ENCODE measurements at regions of chr9 and their contacts with region 1.

Region 1: DNA sequence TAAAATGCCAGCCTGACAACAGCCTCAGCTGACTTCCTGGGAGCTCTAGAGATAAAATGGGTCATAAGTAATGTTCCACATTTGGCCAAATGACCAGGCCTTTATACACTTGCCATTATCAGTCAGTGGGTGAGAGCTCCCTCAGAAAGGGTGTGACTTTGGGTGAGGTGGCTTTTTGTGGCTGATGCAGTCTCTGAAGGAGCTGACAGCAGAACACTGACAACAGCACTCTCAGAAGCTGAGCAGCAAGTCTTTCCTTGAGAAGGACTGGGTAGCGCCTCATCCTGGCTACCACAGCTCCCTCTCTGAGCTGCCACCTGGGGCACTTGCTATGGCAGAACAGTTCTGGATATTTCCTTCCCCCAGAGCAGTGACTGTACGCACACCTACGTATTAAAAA is 22.0 kb upstream of the GNAQ start:
- DNase-seq: no peak
- H3K4me3 ChIP-seq: no peak overlapping the region
- H3K27ac ChIP-seq: no peak overlapping the region
- H3K4me1 ChIP-seq: no peaks in the 10 kb centered on the region
- H3K27me3 ChIP-seq: peaks cover 2% of the 10 kb centered on the region
- CTCF ChIP-seq: no peak

Region 2: GRCh38 chr9:78025186-78025585 is 28.4 kb before region 1 on chr9:
- CTCF ChIA-PET with region 1: interaction called, 15 read pairs
- dilution Hi-C with region 1: no loop called
- in situ Hi-C with region 1: no loop called
- intact Hi-C with region 1: no loop called
- DNase-seq: no peak
- H3K4me3 ChIP-seq: no peak overlapping the region
- H3K27ac ChIP-seq: no peak overlapping the region
- H3K4me1 ChIP-seq: peaks cover 22% of the 10 kb centered on the region
- H3K27me3 ChIP-seq: no peaks in the 10 kb centered on the region
- CTCF ChIP-seq: no peak

Region 3: GRCh38 chr9:78144663-78145377 is 91.2 kb after region 1 on chr9:
- CTCF ChIA-PET with region 1: interaction called, 11 read pairs
- dilution Hi-C with region 1: no loop called
- in situ Hi-C with region 1: no loop called
- intact Hi-C with region 1: no loop called
- DNase-seq: no peak
- H3K4me3 ChIP-seq: no peak overlapping the region
- H3K27ac ChIP-seq: no peak overlapping the region
- H3K4me1 ChIP-seq: no peaks in the 10 kb centered on the region
- H3K27me3 ChIP-seq: no peaks in the 10 kb centered on the region
- CTCF ChIP-seq: no peak

Measured in mammary epithelial cell (primary cell).